MCF 10A (cell line): ENCODE measurements at regions of chr2 and their contacts with region 1.

Region 1: DNA sequence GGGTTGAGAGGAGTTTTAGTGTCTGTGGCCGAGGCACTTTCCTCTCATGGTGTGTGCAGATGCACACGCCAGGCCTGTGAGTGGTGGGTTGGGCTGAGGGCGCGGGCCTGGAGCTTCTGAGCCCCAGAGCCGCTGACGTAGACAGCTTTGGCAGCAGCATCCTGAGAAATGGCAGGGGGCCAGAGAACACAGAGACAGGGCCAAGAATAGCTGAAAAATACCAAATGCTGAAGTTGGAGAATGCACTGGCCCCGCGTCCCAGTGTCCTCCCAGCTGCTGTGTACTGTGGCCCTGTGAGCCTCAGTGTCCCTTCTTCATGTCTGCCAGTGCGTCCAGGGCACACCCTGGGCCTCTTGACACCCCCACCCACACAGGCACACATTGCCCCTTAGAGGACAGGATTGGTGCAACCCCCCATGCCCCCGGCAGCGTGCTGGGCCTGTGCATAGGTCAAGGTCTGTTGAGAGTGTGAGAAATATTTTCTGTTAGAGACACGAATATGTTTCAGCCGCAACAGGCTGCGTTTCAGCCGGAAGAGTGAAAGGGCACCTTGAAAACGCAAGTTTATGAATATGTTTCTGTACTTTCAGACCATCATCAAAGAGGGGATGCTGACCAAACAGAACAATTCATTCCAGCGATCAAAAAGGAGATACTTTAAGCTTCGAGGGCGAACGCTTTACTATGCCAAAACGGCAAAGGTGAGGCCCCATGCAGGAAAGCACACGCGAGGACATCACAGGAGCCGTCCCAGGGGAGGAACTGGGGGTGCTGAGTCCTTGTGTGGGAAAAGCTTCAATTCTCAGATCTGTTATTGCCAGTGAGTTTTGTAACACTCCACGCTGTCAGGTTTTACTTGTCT is 33.6 kb downstream of the DGKD start:
- DNase-seq: peak; percentile 96
- H3K4me3 Mint-ChIP-seq: peak overlapping the region; percentile 40
- H3K27ac Mint-ChIP-seq: peak overlapping the region; percentile 80
- H3K4me1 Mint-ChIP-seq: peaks cover 39% of the 10 kb centered on the region
- H3K27me3 Mint-ChIP-seq: no peaks in the 10 kb centered on the region
- CTCF ChIP-seq: no peak

Region 2: DNA sequence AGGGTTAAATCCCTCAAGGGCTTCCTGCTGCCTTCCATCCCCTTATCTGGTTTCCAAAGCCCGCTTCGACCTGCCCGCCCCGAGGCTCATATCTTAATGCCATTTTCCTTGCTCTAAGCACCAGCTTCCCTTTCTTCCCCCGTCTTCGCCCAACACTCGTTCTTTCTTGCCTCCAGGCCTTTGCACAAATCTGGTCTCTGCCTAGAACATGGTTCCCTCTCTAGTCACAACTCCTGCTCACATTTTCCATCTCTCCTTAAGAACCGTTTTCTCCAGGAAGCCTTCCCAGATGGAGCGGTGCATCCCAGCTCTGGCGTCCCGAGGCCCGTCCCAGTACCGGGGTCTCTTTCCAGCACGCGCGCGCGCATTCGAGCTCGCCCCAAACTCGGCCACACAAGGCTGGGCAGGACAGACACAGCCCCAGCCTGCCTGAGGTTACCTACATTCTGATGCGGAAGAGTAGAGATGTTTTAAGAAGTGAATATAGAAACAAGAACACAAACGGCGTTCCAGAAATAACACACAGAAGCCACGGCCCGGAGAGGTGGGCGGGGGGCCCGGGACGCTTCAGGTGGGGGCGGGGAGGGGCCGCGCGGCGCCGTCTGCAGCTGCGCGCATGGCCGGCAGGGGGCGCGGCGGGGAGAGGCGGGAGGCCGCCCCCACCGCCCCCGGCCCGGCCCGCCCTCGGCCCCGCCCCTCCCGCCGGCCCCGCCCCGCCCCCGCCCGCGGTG is 34.0 kb before region 1 on chr2 and contains the start of gene DGKD:
- CTCF ChIA-PET with region 1: interaction called, 10 read pairs
- POLR2A ChIA-PET with region 1: interaction called, 8 read pairs
- intact Hi-C with region 1: no loop called
- DNase-seq: peak; percentile 45
- H3K4me3 Mint-ChIP-seq: peak within 1 kb of the TSS; percentile 75
- H3K27ac Mint-ChIP-seq: peak within 1 kb of the TSS; percentile 0
- H3K4me1 Mint-ChIP-seq: peaks cover 65% of the 10 kb centered on the region
- H3K27me3 Mint-ChIP-seq: no peaks in the 10 kb centered on the region
- CTCF ChIP-seq: peak; percentile 24
- total RNA-seq, gene DGKD: 55.7 and 59.1 TPM in 2 replicates

Region 3: DNA sequence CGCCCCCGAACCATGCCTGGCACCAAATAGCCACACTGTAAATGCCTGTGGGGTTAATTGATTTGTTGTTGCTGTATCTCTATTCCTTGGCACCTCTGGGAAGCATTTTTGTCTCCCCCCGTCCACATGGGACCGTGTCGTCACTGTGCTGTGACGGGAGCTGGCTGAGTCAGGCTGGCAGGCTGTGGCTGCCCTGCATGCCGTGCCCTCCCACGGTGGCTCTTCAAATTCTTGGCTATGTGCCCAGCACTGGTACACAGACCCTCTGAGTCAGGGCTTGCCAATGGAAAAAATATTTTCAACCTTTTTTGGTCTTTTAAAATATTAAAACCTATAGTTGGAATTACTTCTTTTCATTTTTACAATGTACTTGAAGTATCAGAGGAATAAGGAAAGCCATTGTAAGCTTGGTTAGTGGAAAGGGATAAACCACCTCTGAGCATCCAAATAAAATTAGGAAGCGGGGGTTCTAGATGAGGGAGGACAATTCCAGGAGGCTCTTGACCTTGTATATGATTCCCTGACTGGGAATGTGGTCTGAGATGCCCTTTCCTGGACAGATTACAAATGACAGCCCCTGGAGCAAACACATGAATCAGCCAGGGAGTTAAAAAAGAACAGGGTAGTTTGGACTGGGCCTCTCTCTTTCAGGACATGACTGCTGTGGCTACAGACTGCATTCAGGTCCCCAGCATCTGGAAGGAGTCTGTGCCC is 25.8 kb after region 1 on chr2:
- CTCF ChIA-PET with region 1: interaction called, 4 read pairs
- POLR2A ChIA-PET with region 1: interaction called, 14 read pairs
- intact Hi-C with region 1: no loop called
- DNase-seq: peak; percentile 93
- H3K4me3 Mint-ChIP-seq: peak overlapping the region; percentile 60
- H3K27ac Mint-ChIP-seq: peak overlapping the region; percentile 91
- H3K4me1 Mint-ChIP-seq: peaks cover 35% of the 10 kb centered on the region
- H3K27me3 Mint-ChIP-seq: no peaks in the 10 kb centered on the region
- CTCF ChIP-seq: no peak

Region 4: DNA sequence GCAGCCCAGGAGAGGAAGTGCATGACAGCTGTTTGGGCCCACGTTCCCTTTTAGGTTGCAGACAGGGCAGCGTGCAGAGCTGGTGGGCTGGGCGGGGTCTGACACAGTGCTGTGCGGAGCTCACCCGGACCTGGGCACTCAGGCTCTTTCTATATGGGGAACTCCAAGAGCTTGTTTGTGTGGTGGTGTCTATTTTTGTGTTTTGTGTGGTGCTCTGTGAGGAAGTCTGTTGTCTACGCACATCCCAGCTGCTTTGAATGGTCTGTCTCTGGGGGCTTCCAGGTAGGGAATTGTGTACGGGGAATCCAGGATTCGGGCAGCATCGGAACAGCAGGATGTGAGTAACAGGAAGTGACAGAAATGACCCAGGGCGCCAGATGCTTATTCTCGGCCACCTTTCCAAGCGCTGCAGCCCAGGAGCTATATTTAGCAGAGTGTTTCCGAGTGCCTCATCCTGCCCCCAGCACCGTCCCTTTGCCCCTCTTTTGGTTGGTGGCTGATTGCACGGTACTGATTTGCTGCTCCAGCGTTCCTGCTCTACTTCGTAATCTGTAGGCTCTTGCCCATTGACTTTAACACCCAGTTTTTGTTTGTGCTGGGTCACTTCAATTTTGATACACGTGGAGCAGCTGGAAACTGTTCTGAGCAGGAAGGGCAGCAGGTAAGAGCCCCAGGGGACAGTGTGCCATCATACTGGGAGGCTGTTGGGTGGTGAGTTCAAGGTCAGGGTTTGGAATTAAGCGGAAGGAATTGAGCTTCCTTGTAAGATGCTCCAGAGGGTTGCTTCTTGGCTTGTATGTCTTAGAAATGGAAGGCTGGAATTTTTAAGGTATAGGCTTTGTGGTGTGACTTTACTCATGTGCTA is 31.1 kb after region 1 on chr2:
- CTCF ChIA-PET with region 1: interaction called, 3 read pairs
- POLR2A ChIA-PET with region 1: interaction called, 14 read pairs
- intact Hi-C with region 1: no loop called
- DNase-seq: peak; percentile 79
- H3K4me3 Mint-ChIP-seq: peak overlapping the region; percentile 28
- H3K27ac Mint-ChIP-seq: peak overlapping the region; percentile 92
- H3K4me1 Mint-ChIP-seq: peaks cover 60% of the 10 kb centered on the region
- H3K27me3 Mint-ChIP-seq: no peaks in the 10 kb centered on the region
- CTCF ChIP-seq: no peak

Region 5: GRCh38 chr2:233814056-233814835 is 426.3 kb after region 1 on chr2:
- CTCF ChIA-PET with region 1: no interaction called
- POLR2A ChIA-PET with region 1: no interaction called
- intact Hi-C with region 1: no loop called
- DNase-seq: peak; percentile 16
- H3K4me3 Mint-ChIP-seq: no peak overlapping the region
- H3K27ac Mint-ChIP-seq: no peak overlapping the region
- H3K4me1 Mint-ChIP-seq: no peaks in the 10 kb centered on the region
- H3K27me3 Mint-ChIP-seq: peaks cover 12% of the 10 kb centered on the region
- CTCF ChIP-seq: no peak